ENCODE measurements at regions of chr5 and their contacts with region 1.

Region 1: DNA sequence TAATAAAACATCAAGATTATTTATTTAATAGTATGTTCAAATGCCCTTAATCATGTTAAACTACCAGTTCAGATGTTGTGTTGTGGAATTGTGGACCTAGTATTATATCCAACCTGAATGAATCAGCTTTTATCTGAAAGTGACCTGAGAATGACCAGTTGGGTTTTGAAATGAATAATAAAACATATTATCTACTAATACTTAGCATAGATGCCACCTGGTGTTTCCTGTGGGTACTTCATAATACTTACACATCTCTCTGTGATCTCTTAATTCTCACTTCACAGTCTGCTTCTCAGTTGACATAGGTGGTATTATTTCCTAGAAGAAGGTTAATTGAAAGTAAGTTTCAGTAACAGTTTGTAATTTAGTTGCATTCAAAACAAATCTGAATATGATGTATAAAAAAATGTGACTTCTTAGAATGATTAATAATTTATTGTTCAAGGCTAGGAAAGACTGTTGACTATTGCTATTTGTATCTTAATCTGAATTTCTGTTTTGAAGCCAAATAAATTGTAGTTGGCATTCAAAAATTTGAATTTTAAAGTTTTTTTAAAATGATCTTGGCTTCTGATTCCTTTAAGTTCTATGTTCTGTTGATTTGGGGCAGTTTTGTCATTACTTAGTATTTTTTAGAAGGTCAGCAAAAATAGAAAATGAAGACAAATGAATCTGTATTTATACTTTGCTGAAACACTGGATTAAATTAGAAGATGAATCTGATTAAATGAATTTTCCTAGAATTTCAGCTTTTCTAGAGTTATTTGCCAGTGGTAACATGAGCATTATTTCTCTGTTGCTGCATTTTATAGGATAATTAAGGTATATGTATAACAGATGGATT is 48.2 kb downstream of the KIF2A start:
- DNase-seq: no peak
- ATAC-seq: peak; percentile 64
- H3K4me3 Mint-ChIP-seq: no peak overlapping the region
- H3K27ac Mint-ChIP-seq: no peak overlapping the region
- H3K4me1 Mint-ChIP-seq: no peaks in the 10 kb centered on the region
- H3K27me3 Mint-ChIP-seq: no peaks in the 10 kb centered on the region
- CTCF ChIP-seq: no peak

Region 2: DNA sequence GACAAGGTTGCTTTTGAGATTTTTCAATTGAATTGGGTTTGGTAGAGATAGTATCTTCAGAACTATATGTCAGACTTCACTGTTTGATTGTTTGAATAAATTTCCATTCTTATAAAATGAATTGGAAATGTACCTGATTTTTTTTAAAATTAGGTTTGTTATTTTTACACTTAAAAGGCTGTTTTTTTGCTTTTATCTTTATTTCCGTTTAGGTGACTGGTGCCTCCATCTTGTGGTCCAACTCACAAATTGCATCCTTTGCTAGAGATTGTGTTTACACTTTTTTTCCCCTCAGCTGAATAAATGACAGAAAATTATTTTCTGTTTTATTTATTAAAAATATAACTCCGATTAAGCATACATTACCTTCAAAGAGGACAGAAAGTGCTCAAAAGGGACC is 1393.7 kb before region 1 on chr5:
- CTCF ChIA-PET with region 1: no interaction called
- POLR2A ChIA-PET with region 1: no interaction called
- intact Hi-C with region 1: loop called (anchors 2 kb)
- DNase-seq: no peak
- ATAC-seq: no peak
- H3K4me3 Mint-ChIP-seq: no peak overlapping the region
- H3K27ac Mint-ChIP-seq: no peak overlapping the region
- H3K4me1 Mint-ChIP-seq: peaks cover 2% of the 10 kb centered on the region
- H3K27me3 Mint-ChIP-seq: no peaks in the 10 kb centered on the region
- CTCF ChIP-seq: no peak

Region 3: DNA sequence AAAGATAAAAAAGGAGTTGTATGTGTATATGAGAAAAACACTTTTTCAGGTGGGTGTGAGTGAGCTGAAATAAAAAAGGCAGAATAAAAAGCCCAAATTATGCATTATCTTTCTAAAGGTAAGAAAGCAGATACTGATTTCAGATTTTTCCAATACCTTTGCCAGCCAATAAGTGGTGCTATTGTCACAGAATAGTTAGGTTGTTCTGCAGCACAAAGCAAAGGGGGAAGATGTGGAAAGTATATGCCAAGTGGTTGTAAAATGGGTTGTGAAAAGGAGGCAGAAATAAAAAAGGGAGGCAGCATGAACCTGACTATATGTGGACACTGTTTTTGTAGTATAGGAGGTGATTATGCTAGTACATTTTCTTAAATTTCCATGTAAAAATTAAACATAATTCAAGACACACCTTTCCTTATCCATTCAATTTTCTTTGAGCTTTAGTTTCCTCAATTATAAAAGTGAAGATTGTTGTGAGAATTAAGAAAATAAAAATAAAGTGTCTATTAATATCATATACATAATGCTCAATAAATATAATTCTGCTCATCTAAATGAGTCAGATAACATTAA is 1298.7 kb before region 1 on chr5:
- CTCF ChIA-PET with region 1: no interaction called
- POLR2A ChIA-PET with region 1: no interaction called
- intact Hi-C with region 1: loop called (anchors 5 kb)
- DNase-seq: no peak
- ATAC-seq: peak; percentile 45
- H3K4me3 Mint-ChIP-seq: no peak overlapping the region
- H3K27ac Mint-ChIP-seq: no peak overlapping the region
- H3K4me1 Mint-ChIP-seq: no peaks in the 10 kb centered on the region
- H3K27me3 Mint-ChIP-seq: no peaks in the 10 kb centered on the region
- CTCF ChIP-seq: no peak

Region 4: DNA sequence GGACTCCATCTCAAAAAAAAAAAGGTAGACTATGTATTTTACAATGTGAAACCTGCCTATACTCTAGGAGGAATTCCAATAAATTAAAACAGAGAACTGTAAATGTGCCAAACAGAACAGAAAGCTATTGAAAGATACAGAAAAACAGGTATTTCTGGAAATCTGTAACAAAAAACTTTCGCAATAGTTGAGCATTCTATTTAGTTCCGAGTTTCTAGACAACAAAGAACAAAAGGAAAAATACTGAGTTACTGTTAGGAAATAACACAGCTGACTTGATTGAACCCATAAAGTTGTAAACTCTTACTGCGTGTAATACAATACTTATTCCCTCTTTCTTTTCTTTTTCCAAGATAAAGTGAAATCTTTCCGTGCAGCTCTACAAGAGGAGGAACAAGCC is 30.9 kb after region 1 on chr5:
- CTCF ChIA-PET with region 1: no interaction called
- POLR2A ChIA-PET with region 1: no interaction called
- intact Hi-C with region 1: loop called (anchors 5 kb)
- DNase-seq: no peak
- ATAC-seq: no peak
- H3K4me3 Mint-ChIP-seq: no peak overlapping the region
- H3K27ac Mint-ChIP-seq: no peak overlapping the region
- H3K4me1 Mint-ChIP-seq: no peaks in the 10 kb centered on the region
- H3K27me3 Mint-ChIP-seq: no peaks in the 10 kb centered on the region
- CTCF ChIP-seq: no peak

Region 5: DNA sequence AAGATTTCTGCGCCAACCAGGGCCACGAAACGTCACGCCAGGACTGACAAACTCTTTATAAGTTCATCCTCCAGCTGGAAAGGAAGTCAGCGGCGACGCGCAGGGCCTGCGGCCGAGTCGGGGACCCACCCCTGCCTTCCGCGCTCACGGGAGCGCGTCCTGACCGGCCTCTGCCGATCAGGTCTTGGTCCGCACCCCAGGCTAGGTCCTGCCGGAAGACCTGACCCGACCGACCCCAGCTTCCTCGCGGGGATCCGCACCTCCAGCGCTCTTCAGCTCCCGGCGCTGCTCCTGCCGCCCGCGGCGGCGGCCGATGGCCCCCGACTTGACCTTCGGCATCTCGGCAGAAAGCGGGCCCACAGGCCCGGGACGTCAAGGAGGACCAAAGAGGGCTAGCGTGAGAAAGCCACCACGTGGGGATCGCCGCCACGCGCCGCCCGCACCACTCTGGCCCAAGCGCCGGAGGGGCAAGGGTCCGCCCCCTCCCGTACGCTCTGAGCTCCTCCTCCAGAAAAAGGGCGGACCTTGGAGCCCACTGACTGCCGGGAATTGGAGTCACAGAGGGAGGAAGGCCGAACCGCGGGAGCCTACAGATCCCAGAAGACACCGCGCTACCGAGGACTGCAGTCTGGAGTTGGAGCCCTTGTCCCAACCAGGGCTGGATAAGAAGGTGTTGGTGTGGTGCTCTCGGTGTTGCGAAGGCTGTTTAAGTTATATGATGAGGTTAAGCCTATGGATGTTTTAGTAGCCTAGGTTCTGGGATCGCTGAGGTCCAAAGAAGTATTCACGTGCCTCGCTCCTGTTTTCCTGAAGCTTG is 49.4 kb after region 1 on chr5 and contains the start of gene DIMT1:
- CTCF ChIA-PET with region 1: no interaction called
- POLR2A ChIA-PET with region 1: no interaction called
- intact Hi-C with region 1: loop called (anchors 5 kb)
- DNase-seq: peak; percentile 86
- ATAC-seq: peak; percentile 97
- H3K4me3 Mint-ChIP-seq: peak within 1 kb of the TSS; percentile 94
- H3K27ac Mint-ChIP-seq: peak within 1 kb of the TSS; percentile 89
- H3K4me1 Mint-ChIP-seq: peaks cover 23% of the 10 kb centered on the region
- H3K27me3 Mint-ChIP-seq: no peaks in the 10 kb centered on the region
- CTCF ChIP-seq: no peak
- total RNA-seq, gene DIMT1: 28.2 and 28.7 TPM in 2 replicates